ENCODE measurements at regions of chr13 and their contacts with region 1.

Region 1: GRCh38 chr13:114128624-114129522 is 3.5 kb downstream of the RASA3 start:
- DNase-seq: peak; percentile 95

Region 2: DNA sequence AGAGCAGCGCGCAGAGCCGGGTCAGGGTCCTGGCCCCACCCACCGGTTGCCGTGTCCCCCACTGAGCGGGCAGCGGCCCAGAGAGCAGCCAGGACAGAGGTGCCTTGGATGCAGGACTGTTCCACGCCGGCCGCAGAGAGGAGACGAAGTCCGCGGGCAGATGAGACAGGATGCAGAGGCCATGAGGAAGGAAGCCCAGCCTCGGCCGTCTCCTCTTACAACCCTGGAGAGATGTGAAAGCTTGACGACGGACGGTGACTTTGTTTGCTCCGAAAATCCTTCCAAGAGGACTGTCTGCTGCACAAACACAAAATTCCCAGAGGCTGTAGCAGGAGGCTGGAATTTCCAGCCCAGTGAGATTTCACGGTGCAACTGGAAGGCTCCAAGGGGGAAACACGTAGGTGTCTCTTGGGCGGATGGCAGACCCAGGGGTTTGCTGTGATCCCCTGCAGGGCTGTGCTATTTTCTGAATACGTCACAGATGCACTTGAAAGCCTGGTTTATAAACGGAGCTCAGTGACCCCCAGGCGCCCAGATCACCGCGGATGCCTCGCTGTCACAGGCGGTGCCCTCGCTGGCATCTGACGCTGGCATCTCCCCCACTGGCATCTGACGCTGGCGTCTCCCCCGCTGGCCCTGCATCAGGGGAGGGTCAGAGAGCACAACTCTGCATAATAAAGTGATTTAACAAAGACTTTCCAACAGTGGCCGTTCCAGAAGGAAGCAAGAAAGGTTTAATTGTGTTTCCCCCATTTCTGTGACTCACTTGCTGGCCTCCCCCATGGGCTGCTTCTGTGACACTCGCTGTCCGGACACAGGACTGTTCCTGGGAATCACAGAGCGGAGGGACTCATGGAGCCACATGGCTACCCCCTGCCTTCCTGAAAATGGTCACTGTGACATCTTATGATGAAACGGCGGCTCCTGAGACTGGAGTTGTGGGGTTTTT is 93.0 kb before region 1 on chr13:
- intact Hi-C with region 1: loop called in 1 of 2 experiments (anchors 10 kb)
- DNase-seq: no peak

Measured in posterior vena cava (tissue), 2 donors.